Posterior cingulate gyrus (tissue), 11 donors: ENCODE measurements at regions of chr4 and their contacts with region 1.

Region 1: GRCh38 chr4:74133786-74134499 is 24.0 kb upstream of the MTHFD2L start:
- DNase-seq: peak; percentile 19 to 90 (median 68)

Region 2: GRCh38 chr4:73593631-73594241 is 540.2 kb before region 1 on chr4:
- intact Hi-C with region 1: loop called (anchors 10 kb)
- DNase-seq: no peak

Region 3: DNA sequence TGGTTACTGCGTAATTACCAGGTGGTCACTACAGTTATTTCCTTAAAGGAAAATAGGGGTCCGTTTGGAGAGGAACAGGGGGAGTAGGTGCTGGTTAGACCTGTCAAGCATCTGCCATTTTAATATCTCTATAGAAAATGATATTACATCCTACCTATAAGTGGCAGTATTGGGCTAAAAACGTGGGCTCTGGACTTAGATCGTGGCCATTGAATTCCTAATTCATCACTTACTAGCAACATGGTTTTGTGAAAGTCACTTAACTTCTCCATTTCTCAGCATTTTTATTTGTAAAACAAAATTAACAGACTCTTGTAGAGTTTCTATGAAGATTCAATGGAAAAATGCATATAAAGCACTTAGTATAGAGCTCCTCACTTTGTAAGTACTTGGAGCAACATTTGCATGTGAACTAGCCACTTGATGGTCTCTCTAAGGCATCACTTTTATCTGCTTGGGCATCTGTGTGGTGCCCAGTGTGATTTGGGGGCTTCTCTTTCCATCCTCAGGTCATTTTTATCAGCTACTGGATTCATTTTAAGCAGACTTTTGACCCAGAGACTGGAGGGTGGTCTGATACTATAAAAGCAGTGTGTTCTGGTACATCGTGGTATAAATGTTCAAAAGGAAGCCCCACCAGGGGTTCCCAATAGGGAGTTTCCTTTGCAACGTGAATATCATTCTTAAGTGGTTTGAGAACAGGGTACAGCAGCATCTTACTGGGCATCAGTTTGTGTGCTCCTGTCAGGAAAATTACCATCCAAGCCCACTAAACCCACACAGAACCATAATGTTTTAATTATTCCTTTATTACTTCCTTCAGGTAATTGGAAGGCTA is 471.0 kb before region 1 on chr4:
- intact Hi-C with region 1: loop called (anchors 2 kb)
- DNase-seq: no peak

Region 4: DNA sequence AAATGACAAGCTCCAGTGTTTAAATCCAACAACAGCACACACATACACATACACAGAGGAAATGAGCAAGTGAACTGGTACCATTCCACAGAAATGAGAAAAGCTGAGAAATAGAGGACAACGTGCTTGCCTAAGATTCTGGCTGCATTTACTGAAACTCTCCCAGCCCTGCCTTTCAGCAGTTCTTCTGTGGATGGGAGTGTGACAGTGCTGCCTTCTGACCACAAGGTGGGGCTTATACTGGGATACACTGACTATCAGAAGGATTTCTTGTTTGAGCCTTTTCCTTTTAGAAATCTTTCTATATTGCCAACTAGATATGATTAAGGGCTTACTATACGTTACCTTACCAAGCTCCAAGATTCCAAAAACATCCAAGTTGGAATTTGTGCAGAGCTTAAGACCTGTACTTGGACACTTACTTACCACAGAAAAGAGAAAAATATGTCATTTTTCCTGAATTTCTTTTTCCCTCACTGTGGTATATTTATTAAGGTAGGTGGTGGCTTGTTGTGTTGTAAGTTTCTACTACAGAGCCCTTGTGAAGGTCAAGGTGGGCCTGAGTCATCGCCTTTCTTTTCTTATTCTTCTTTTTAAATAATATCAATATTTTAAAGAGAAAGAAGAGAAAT is 404.3 kb before region 1 on chr4:
- intact Hi-C with region 1: loop called (anchors 2 kb)
- DNase-seq: peak; percentile 29 to 90 (median 53)

Region 5: DNA sequence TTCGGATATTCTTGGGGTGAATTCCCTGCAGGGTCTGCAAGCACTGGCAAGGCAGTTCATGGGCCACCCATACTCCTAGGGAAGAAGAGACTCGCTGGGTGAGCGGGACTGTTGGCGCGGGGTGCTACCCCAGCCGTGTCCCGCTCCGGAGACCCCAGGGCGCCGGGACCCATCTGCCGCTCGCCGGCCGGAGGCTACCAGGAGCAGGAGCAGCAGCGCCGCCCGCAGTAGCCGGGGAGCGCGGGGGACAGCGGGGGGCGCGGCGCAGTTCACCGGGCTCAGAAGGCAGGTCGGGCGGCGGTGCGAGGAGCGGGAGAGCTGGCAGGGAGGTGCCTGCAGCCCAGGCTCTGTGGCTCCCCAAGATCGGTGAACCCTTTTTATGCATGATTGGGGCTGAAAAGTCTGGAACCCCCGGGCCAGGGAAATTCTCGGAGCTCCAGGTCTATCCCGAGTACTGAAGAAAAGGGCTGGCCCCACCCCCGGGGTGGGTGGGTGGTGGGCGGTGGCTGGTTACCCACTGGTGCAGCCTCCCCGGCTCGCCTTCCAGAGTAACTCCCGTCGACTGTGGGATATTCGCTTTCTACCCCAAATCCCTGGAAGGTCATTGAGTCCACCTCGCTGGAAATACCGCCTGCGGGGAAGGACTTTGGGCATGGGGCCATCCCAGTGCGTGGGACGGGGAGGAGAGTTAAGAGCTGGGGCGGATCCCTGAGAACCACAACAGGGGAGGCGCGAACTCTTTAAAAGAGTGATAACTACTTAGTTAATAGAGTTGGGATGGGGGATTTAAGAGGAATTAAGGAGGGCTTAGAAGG is 189.7 kb before region 1 on chr4:
- intact Hi-C with region 1: no loop called
- DNase-seq: peak in 2 of 10 donors; percentile 57 to 70